Activated CD8-positive, alpha-beta memory T cell treated with anti-CD3 and anti-CD28 coated beads, Interleukin-2, amount 10 ng/mL, durations not matched to agents 7 days and 5 days (primary cell): ENCODE measurements at regions of chr4 and their contacts with region 1.

Region 1: GRCh38 chr4:109433205-109434006 is at the start of gene SEC24B:
- DNase-seq: peak; percentile 93
- ATAC-seq: peak; percentile 92
- H3K4me3 Mint-ChIP-seq: peak within 1 kb of the TSS; percentile 88
- H3K27ac Mint-ChIP-seq: peak within 1 kb of the TSS; percentile 84
- H3K4me1 Mint-ChIP-seq: peaks cover 53% of the 10 kb centered on the region
- H3K27me3 Mint-ChIP-seq: no peaks in the 10 kb centered on the region
- total RNA-seq, gene SEC24B: 22.0 to 25.9 TPM

Region 2: GRCh38 chr4:109359040-109359646 is 74.3 kb before region 1 on chr4:
- CTCF ChIA-PET with region 1: no interaction called
- DNase-seq: peak; percentile 78
- ATAC-seq: peak; percentile 90
- H3K4me3 Mint-ChIP-seq: peak overlapping the region; percentile 16
- H3K27ac Mint-ChIP-seq: peak overlapping the region; percentile 90
- H3K4me1 Mint-ChIP-seq: peaks cover 41% of the 10 kb centered on the region
- H3K27me3 Mint-ChIP-seq: peaks cover 63% of the 10 kb centered on the region

Region 3: GRCh38 chr4:109447278-109447677 is 13.9 kb after region 1 on chr4:
- CTCF ChIA-PET with region 1: interaction called, 13 read pairs
- DNase-seq: no peak
- ATAC-seq: no peak
- H3K4me3 Mint-ChIP-seq: no peak overlapping the region
- H3K27ac Mint-ChIP-seq: no peak overlapping the region
- H3K4me1 Mint-ChIP-seq: peaks cover 29% of the 10 kb centered on the region
- H3K27me3 Mint-ChIP-seq: no peaks in the 10 kb centered on the region

Region 4: GRCh38 chr4:109658871-109659410 is 225.5 kb after region 1 on chr4:
- CTCF ChIA-PET with region 1: interaction called, 12 read pairs
- DNase-seq: no peak
- ATAC-seq: no peak
- H3K4me3 Mint-ChIP-seq: no peak overlapping the region
- H3K27ac Mint-ChIP-seq: no peak overlapping the region
- H3K4me1 Mint-ChIP-seq: peaks cover 8% of the 10 kb centered on the region
- H3K27me3 Mint-ChIP-seq: no peaks in the 10 kb centered on the region

Region 5: DNA sequence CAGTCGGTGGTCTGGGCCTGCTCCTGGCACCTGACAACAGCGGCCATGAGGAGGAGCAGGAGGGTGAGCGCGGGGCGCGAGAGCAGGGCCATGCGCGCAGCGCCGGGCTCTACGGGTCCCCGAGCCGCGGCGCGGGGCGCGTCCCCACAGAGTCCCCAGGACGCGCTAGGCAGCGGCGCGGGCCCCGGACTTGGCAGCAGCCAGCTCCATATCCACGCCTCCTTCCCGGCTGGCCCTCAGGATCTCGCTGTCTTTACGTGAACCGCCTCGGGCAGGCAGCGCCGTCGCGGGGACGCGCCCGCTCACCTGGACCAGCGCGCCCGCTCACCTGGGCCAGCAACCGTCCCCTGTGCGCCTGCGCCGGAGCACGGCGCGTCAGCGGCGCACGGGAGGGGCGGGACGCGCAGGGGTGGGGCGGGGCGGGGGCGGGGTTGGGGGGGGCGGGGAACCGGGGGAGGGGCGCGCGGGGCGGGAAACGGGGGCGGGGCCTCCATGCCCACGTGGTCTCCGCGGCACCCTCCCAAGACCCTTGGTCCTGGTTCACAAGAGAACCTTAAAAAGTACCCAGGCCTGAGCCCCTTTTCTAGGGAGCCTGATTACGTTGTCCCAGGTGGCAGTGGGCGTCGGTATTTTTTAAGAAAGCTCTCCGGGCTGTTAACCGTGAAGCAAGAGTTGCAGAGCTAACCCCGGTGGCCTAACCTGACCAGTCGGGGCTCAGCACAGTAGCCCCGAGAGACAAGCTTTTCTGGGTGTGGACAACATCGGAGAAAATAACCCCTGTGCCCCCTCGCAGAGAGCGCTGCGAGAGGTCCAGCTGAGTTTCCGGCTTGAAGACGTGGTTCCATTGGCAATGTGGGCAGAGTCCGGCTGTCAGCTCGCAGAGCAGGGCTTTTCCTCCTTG is 296.6 kb after region 1 on chr4 and contains the start of gene PLA2G12A:
- CTCF ChIA-PET with region 1: interaction called, 12 read pairs
- DNase-seq: peak; percentile 72
- ATAC-seq: peak; percentile 89
- H3K4me3 Mint-ChIP-seq: peak within 1 kb of the TSS; percentile 87
- H3K27ac Mint-ChIP-seq: peak within 1 kb of the TSS; percentile 83
- H3K4me1 Mint-ChIP-seq: peaks cover 18% of the 10 kb centered on the region
- H3K27me3 Mint-ChIP-seq: no peaks in the 10 kb centered on the region
- total RNA-seq, gene PLA2G12A: 14.4 to 14.6 TPM

Region 6: GRCh38 chr4:109820563-109820962 is 387.2 kb after region 1 on chr4:
- CTCF ChIA-PET with region 1: interaction called, 22 read pairs
- DNase-seq: no peak
- ATAC-seq: no peak
- H3K4me3 Mint-ChIP-seq: no peak overlapping the region
- H3K27ac Mint-ChIP-seq: peak overlapping the region; percentile 41
- H3K4me1 Mint-ChIP-seq: peaks cover 47% of the 10 kb centered on the region
- H3K27me3 Mint-ChIP-seq: no peaks in the 10 kb centered on the region

Region 7: GRCh38 chr4:109833756-109834155 is 400.4 kb after region 1 on chr4:
- CTCF ChIA-PET with region 1: interaction called, 10 read pairs
- DNase-seq: no peak
- ATAC-seq: no peak
- H3K4me3 Mint-ChIP-seq: no peak overlapping the region
- H3K27ac Mint-ChIP-seq: no peak overlapping the region
- H3K4me1 Mint-ChIP-seq: no peaks in the 10 kb centered on the region
- H3K27me3 Mint-ChIP-seq: no peaks in the 10 kb centered on the region